SK-N-SH (cell line): ENCODE measurements at regions of chr1 and their contacts with region 1.

Region 1: GRCh38 chr1:209565759-209566678 is 17.5 kb upstream of the CAMK1G start:
- DNase-seq: peak; percentile 69
- H3K4me3 ChIP-seq: no peak overlapping the region
- H3K27ac ChIP-seq: no peak overlapping the region; a peak in 1 of 4 replicates
- H3K4me1 ChIP-seq: peaks cover 10 to 11% of the 10 kb centered on the region in 2 experiments; a peak in 3 of 4 replicates
- H3K27me3 ChIP-seq: no peaks in the 10 kb centered on the region
- CTCF ChIP-seq: peak; percentile 82
- EP300 ChIP-seq: no peak
- RAD21 ChIP-seq: peak; percentile 87

Region 2: DNA sequence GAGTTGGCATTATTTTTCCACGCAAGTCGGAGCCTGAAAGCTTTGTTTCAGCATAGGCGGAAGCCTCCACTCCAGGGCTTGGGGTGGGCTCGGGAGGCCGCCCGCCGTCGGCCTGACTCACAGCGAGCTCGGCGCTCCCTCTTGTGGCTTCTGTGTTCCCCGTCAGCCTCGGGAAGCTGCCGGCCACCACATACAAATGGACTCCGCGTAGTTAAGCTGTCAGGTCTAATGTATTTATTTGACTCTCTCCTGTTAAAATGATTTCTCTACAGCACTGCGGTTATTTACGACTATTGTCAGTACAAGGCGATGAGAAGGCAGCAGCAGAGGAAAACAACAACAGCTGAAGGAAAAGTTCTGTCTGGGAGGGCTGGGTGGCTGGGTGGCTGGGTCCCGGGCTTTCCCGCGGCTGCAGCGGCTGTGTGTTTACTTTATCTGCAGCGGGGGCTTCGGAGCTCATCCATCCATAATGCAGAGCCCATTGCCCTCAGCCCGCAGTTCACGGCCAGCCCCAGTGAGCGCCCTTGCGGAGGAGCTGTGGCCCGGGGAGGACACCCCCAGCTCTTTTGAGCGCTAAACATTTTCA is 358.2 kb before region 1 on chr1:
- CTCF ChIA-PET with region 1: interaction called, 34 read pairs
- POLR2A ChIA-PET with region 1: no interaction called
- DNase-seq: peak; percentile 87
- H3K4me3 ChIP-seq: peak overlapping the region; percentile 38 to 49
- H3K27ac ChIP-seq: peak overlapping the region in 1 of 2 experiments; percentile 71; a peak in 2 of 4 replicates
- H3K4me1 ChIP-seq: peaks cover 0 to 23% of the 10 kb centered on the region in 2 experiments; a peak in 3 of 4 replicates
- H3K27me3 ChIP-seq: no peaks in the 10 kb centered on the region
- CTCF ChIP-seq: peak; percentile 87
- EP300 ChIP-seq: no peak
- RAD21 ChIP-seq: peak; percentile 92

Region 3: GRCh38 chr1:209549443-209550205 is 16.4 kb before region 1 on chr1:
- CTCF ChIA-PET with region 1: interaction called, 10 read pairs
- POLR2A ChIA-PET with region 1: no interaction called
- DNase-seq: peak; percentile 15
- H3K4me3 ChIP-seq: no peak overlapping the region
- H3K27ac ChIP-seq: no peak overlapping the region
- H3K4me1 ChIP-seq: peaks cover 0 to 5% of the 10 kb centered on the region in 2 experiments; a peak in 2 of 4 replicates
- H3K27me3 ChIP-seq: no peaks in the 10 kb centered on the region
- CTCF ChIP-seq: peak; percentile 28; the same call in 1 of the 2 replicates
- EP300 ChIP-seq: no peak
- RAD21 ChIP-seq: no peak

Region 4: GRCh38 chr1:209576798-209577197 is 10.8 kb after region 1 on chr1:
- CTCF ChIA-PET with region 1: interaction called, 139 read pairs
- POLR2A ChIA-PET with region 1: no interaction called
- DNase-seq: peak; percentile 84
- H3K4me3 ChIP-seq: no peak overlapping the region; a peak in 1 of 4 replicates
- H3K27ac ChIP-seq: no peak overlapping the region
- H3K4me1 ChIP-seq: peaks cover 3 to 7% of the 10 kb centered on the region in 2 experiments; a peak in 1 of 4 replicates
- H3K27me3 ChIP-seq: no peaks in the 10 kb centered on the region
- CTCF ChIP-seq: peak; percentile 96
- EP300 ChIP-seq: no peak
- RAD21 ChIP-seq: peak; percentile 88

Region 5: GRCh38 chr1:209601809-209602657 is 36.0 kb after region 1 on chr1:
- CTCF ChIA-PET with region 1: interaction called, 20 read pairs
- POLR2A ChIA-PET with region 1: no interaction called
- DNase-seq: peak; percentile 55
- H3K4me3 ChIP-seq: peak overlapping the region in 1 of 2 experiments; percentile 18; a peak in 1 of 4 replicates
- H3K27ac ChIP-seq: peak overlapping the region in 1 of 2 experiments; percentile 79; a peak in 1 of 4 replicates
- H3K4me1 ChIP-seq: peaks cover 0 to 27% of the 10 kb centered on the region in 2 experiments; a peak in 3 of 4 replicates
- H3K27me3 ChIP-seq: no peaks in the 10 kb centered on the region
- CTCF ChIP-seq: peak; percentile 71
- EP300 ChIP-seq: no peak
- RAD21 ChIP-seq: peak; percentile 77

Region 6: GRCh38 chr1:209618756-209619420 is 52.9 kb after region 1 on chr1:
- CTCF ChIA-PET with region 1: interaction called, 10 read pairs
- POLR2A ChIA-PET with region 1: no interaction called
- DNase-seq: peak; percentile 53
- H3K4me3 ChIP-seq: no peak overlapping the region
- H3K27ac ChIP-seq: no peak overlapping the region
- H3K4me1 ChIP-seq: peaks cover 9 to 31% of the 10 kb centered on the region in 2 experiments; a peak in 2 of 4 replicates
- H3K27me3 ChIP-seq: no peaks in the 10 kb centered on the region
- CTCF ChIP-seq: no peak
- EP300 ChIP-seq: no peak
- RAD21 ChIP-seq: no peak

Region 7: DNA sequence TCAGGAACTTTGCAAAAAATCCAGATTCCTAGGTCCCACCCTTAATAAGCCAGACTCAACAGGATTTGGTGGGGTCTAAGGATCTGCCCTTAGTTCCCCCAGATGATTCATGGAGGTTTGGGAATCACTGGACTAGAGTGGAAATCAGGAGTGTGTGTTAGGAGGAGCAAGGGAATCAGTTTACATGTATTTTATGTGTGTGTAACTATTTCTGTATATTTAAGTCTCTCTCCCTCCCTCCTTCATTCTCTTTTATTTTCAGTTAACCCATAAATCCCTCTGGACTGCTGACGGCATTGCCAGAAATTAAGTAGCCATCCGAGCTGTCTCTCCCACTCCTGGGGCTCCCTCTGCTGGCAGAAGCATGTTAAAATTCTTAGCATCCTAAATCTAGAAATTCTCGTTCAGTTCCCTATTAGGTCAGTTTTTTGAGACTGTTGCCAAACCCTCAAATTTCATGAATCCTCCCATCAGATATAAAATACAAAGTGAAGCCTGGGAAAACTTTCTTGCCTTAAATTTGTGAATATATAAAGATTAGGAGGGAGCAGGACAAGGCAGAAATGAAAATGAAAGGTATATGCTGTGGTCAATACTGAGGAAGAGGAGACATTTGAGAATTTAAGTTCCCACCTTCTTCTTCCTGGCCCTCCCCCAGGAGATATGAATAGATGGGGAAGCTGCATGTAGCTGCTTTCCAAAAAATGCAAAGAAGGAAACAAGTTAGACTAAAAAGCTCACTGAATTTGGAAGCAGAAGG is 126.9 kb after region 1 on chr1:
- CTCF ChIA-PET with region 1: interaction called, 42 read pairs
- POLR2A ChIA-PET with region 1: no interaction called
- DNase-seq: peak; percentile 61
- H3K4me3 ChIP-seq: no peak overlapping the region; a peak in 1 of 4 replicates
- H3K27ac ChIP-seq: peak overlapping the region; percentile 64; a peak in 3 of 4 replicates
- H3K4me1 ChIP-seq: peaks cover 4 to 27% of the 10 kb centered on the region in 2 experiments
- H3K27me3 ChIP-seq: no peaks in the 10 kb centered on the region
- CTCF ChIP-seq: peak; percentile 97
- EP300 ChIP-seq: no peak
- RAD21 ChIP-seq: peak; percentile 97

Region 8: GRCh38 chr1:209945377-209945776 is 379.4 kb after region 1 on chr1:
- CTCF ChIA-PET with region 1: no interaction called
- POLR2A ChIA-PET with region 1: no interaction called
- DNase-seq: no peak
- H3K4me3 ChIP-seq: no peak overlapping the region
- H3K27ac ChIP-seq: no peak overlapping the region
- H3K4me1 ChIP-seq: peaks cover 4 to 8% of the 10 kb centered on the region in 2 experiments; a peak in 2 of 4 replicates
- H3K27me3 ChIP-seq: no peaks in the 10 kb centered on the region
- CTCF ChIP-seq: no peak
- EP300 ChIP-seq: no peak
- RAD21 ChIP-seq: no peak